ENCODE measurements at regions of chr5 and their contacts with region 1.

Region 1: DNA sequence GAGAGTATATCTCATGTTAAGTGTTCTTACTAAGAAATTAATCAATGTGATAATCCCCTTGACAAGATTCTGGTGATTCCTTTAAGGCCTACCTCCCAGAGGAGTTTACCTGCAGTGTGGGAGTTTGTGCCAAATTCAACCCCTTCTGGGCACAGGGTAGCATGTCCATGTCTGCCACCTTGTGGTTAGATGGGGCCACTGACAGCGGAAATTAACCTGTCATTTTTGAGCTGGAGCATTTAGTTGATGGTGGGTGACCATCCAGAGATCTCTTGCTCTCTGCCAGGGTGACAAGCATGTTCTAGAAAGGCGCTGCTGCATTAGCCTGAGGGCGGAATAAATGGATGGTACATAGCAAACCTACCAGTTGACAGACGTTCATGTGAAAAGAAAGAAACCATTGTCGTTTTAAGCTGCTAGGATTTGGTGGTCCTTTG is 132.2 kb downstream of the FBXO4 start:
- DNase-seq: peak in 2 of 3 donors; percentile 32 to 68
- ATAC-seq: peak; percentile 88 to 92 (median 91)
- H3K4me3 ChIP-seq: no peak overlapping the region
- H3K27ac ChIP-seq: no peak overlapping the region
- H3K4me1 ChIP-seq: no peaks in the 10 kb centered on the region
- H3K27me3 ChIP-seq: no peaks in the 10 kb centered on the region
- CTCF ChIP-seq: peak; percentile 65 to 81 (median 75)
- POLR2A ChIP-seq: no peak

Region 2: DNA sequence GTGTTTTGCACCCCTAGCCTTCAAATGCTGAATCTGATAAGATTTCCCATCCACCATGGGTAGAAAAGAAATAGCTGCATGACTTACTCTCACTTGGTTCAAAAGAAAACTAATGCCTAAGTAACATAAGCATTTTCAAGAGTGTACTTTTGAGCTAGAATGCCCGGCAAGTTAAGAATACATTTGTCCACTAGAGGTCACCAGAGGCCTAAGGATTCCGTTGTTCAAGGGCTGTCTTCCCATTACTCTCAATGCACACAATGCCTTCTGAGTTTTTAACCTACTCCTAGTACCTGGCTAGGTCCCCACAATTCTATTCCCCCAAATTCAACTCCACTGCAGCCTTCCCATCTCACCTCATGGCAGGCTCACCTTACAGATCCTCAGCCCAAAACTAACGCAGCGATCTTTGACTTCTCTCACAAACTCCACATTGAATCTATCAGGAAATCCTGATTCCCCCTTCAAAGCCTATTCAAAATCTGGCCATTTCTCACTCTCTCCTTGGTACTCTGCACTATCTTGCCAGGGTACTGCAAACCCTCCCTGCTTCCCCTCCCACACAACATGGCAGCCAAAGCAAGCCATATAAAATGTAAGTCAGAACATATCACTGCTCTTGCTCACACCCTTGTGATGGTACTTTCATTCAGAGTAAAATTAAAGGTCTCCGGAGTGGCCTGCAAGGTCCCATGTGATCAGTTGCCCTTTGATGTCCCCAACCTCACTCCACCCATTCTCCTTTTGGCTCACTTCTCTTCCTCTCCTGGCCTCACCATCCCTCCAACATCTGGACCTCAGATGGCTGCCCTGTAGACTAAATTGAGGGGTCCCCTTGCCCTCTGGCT is 200.4 kb before region 1 on chr5:
- intact Hi-C with region 1: loop called in 1 of 2 experiments (anchors 10 kb)
- DNase-seq: peak in 1 of 3 donors; percentile 58
- ATAC-seq: peak; percentile 95 to 98 (median 97)
- H3K4me3 ChIP-seq: no peak overlapping the region
- H3K27ac ChIP-seq: no peak overlapping the region
- H3K4me1 ChIP-seq: no peaks in the 10 kb centered on the region
- H3K27me3 ChIP-seq: no peaks in the 10 kb centered on the region
- CTCF ChIP-seq: peak; percentile 70 to 83 (median 79)
- POLR2A ChIP-seq: no peak

Measured in right lobe of liver (tissue), 6 donors.